CD4-positive, alpha-beta T cell (primary cell): ENCODE measurements at regions of chr1 and their contacts with region 1.

Region 1: GRCh38 chr1:24201941-24202440 is 14.9 kb upstream of the IFNLR1 start:
- DNase-seq: peak; percentile 30 to 76 (median 47)
- ATAC-seq: peak; percentile 43
- H3K4me3 ChIP-seq: no peak overlapping the region
- H3K4me3 Mint-ChIP-seq: no peak overlapping the region
- H3K27ac ChIP-seq: no peak overlapping the region
- H3K27ac Mint-ChIP-seq: no peak overlapping the region
- H3K4me1 ChIP-seq: peaks cover 8% of the 10 kb centered on the region
- H3K4me1 Mint-ChIP-seq: peaks cover 6% of the 10 kb centered on the region
- H3K27me3 ChIP-seq: peaks cover 0 to 8% of the 10 kb centered on the region in 2 experiments
- H3K27me3 Mint-ChIP-seq: no peaks in the 10 kb centered on the region
- CTCF ChIP-seq: peak; percentile 77

Region 2: DNA sequence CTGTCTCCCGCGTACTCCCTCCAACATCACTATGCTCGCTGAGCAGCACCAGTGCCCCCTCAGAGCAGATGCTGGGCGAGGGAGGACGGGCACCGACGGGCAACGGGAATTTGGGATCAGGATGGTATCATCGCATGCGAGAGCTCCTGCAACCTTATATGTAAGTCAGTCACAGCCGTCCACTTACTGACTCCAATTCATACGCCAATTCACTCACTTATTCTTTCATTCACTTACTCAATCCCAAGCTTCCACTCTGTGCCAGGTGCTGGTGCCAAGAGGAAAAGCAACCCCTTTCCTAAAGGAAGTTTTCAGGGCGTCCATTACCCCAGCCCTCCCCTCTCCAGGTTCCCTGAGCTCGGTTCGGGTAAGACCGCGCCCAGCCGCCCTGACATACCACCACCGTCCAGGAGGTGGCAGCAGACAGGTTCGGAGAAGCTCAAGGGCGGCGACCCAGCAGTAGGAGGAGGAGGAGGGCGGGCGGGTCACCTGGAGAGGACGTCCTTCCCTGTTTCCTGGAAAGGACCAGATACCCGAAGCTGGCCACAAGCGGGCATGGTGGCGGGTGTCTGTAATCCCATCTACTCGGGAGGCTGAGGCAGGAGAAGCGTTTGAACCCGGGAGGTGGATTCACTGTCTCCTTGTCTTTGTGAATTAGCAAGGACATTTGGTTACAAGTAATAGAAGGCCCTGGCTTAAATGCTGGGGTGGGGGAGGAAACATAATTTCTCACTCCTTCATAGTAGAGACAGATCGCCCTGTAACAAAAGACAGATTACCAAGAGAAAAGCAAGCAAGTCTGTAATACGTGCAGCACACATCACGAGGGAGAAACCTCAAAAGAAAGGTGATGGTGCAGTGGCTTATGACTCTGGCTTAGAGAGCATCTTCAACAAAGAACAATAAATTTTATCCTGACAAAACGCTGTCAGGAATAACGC is 51.5 kb before region 1 on chr1:
- CTCF ChIA-PET with region 1: interaction called, 11 read pairs
- POLR2A ChIA-PET with region 1: no interaction called
- intact Hi-C with region 1: loop called in 1 of 2 experiments (anchors 2 kb)
- DNase-seq: peak; percentile 76 to 91 (median 87)
- ATAC-seq: peak; percentile 98
- H3K4me3 ChIP-seq: peak overlapping the region; percentile 31
- H3K4me3 Mint-ChIP-seq: peak overlapping the region; percentile 44
- H3K27ac ChIP-seq: no peak overlapping the region
- H3K27ac Mint-ChIP-seq: no peak overlapping the region
- H3K4me1 ChIP-seq: peaks cover 12% of the 10 kb centered on the region
- H3K4me1 Mint-ChIP-seq: peaks cover 11% of the 10 kb centered on the region
- H3K27me3 ChIP-seq: peaks cover 11 to 23% of the 10 kb centered on the region in 2 experiments
- H3K27me3 Mint-ChIP-seq: peaks cover 46% of the 10 kb centered on the region
- CTCF ChIP-seq: peak; percentile 87

Region 3: GRCh38 chr1:24167008-24167407 is 35.0 kb before region 1 on chr1:
- CTCF ChIA-PET with region 1: no interaction called
- POLR2A ChIA-PET with region 1: no interaction called
- intact Hi-C with region 1: no loop called
- DNase-seq: no peak
- ATAC-seq: no peak
- H3K4me3 ChIP-seq: no peak overlapping the region
- H3K4me3 Mint-ChIP-seq: no peak overlapping the region
- H3K27ac ChIP-seq: no peak overlapping the region
- H3K27ac Mint-ChIP-seq: no peak overlapping the region
- H3K4me1 ChIP-seq: no peaks in the 10 kb centered on the region
- H3K4me1 Mint-ChIP-seq: no peaks in the 10 kb centered on the region
- H3K27me3 ChIP-seq: no peaks in the 10 kb centered on the region
- H3K27me3 Mint-ChIP-seq: no peaks in the 10 kb centered on the region
- CTCF ChIP-seq: no peak

Region 4: GRCh38 chr1:24190983-24191461 is 11.0 kb before region 1 on chr1:
- CTCF ChIA-PET with region 1: interaction called, 10 read pairs
- POLR2A ChIA-PET with region 1: no interaction called
- intact Hi-C with region 1: no loop called
- DNase-seq: no peak
- ATAC-seq: no peak
- H3K4me3 ChIP-seq: no peak overlapping the region
- H3K4me3 Mint-ChIP-seq: peak overlapping the region; percentile 23
- H3K27ac ChIP-seq: no peak overlapping the region
- H3K27ac Mint-ChIP-seq: no peak overlapping the region
- H3K4me1 ChIP-seq: peaks cover 34% of the 10 kb centered on the region
- H3K4me1 Mint-ChIP-seq: peaks cover 38% of the 10 kb centered on the region
- H3K27me3 ChIP-seq: no peaks in the 10 kb centered on the region
- H3K27me3 Mint-ChIP-seq: no peaks in the 10 kb centered on the region
- CTCF ChIP-seq: no peak

Region 5: GRCh38 chr1:24635195-24635843 is 433.3 kb after region 1 on chr1:
- CTCF ChIA-PET with region 1: interaction called, 4 read pairs
- POLR2A ChIA-PET with region 1: interaction called, 3 read pairs
- intact Hi-C with region 1: loop called (anchors 1 kb)
- DNase-seq: peak in 3 of 14 experiments; percentile 69 to 75 (median 74)
- ATAC-seq: peak; percentile 89
- H3K4me3 ChIP-seq: no peak overlapping the region
- H3K4me3 Mint-ChIP-seq: no peak overlapping the region
- H3K27ac ChIP-seq: no peak overlapping the region
- H3K27ac Mint-ChIP-seq: no peak overlapping the region
- H3K4me1 ChIP-seq: no peaks in the 10 kb centered on the region
- H3K4me1 Mint-ChIP-seq: peaks cover 9% of the 10 kb centered on the region
- H3K27me3 ChIP-seq: peaks cover 0 to under 1% of the 10 kb centered on the region in 2 experiments
- H3K27me3 Mint-ChIP-seq: peaks cover 11% of the 10 kb centered on the region
- CTCF ChIP-seq: peak; percentile 76

Region 6: DNA sequence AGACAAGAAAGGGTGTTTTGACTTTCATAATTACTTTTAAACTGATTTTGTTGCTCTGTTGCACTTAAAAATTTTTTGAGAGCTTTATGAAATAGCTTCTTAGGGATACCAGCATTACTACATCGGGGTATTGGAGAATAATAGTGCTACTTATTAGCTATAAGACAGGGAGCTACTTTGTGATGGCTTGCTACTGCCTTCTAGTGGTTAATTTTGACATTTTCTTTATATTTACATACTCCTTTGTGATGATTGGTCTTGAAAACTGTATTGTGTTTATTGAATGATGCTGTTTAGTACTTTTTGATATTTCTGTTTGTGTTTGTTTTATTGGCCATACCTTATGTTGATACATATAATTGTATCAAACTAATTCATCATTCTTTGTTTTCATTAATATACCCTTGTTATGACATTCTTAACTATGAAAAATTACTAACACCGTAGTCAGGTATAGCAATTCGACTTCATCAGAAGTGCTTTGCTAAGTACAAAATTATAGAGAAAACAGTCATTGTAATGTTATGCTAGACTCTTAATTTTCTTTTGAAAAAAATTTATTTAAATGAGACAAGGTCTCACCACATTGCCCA is 628.8 kb after region 1 on chr1:
- CTCF ChIA-PET with region 1: interaction called, 9 read pairs
- POLR2A ChIA-PET with region 1: interaction called, 3 read pairs
- intact Hi-C with region 1: loop called (anchors 2 kb)
- DNase-seq: peak in 3 of 14 experiments; percentile 65 to 75 (median 73)
- ATAC-seq: peak; percentile 44
- H3K4me3 ChIP-seq: no peak overlapping the region
- H3K4me3 Mint-ChIP-seq: no peak overlapping the region
- H3K27ac ChIP-seq: no peak overlapping the region
- H3K27ac Mint-ChIP-seq: no peak overlapping the region
- H3K4me1 ChIP-seq: no peaks in the 10 kb centered on the region
- H3K4me1 Mint-ChIP-seq: no peaks in the 10 kb centered on the region
- H3K27me3 ChIP-seq: no peaks in the 10 kb centered on the region
- H3K27me3 Mint-ChIP-seq: peaks cover 5% of the 10 kb centered on the region
- CTCF ChIP-seq: peak; percentile 91